HEK293T (cell line): ENCODE measurements at regions of chr15 and their contacts with region 1.

Region 1: DNA sequence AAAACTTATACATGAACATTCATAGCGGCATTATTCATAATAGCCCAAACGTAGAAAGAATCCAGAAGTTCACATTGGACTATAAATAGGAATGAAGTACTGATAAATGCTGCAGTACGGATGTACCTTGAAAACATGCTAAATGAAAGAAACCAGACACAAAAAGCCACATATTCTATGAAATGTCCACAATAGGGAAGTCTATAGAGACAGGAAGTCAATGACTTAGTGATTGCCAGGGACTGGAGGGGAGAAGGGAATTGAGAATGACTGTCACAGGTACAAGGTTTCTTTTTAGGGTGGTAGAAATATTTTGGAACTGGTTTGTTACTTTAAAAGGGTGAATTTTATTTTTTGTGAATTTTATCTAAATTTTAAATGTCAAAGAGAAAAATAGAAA is 71.4 kb upstream of the SKOR1 start:
- DNase-seq: no peak

Region 2: DNA sequence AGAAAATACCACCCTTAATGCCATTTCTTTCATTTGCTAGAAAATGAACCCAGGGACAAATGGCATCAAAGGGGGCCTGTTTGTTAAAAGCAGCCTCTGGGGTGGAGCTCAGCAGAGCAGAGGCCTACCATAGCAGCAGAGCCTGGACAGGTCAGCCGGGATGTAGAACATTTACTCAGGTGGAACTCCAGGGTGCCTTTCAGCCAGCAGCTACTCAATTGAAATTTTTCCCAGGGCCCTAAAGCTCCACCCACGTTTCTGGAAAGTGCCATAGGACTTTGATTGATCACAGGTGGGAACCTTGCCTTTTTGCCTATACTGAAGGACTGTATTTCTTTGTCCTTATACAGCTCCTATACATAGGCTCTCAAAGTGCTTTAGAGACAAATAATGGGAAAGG is 307.4 kb before region 1 on chr15:
- CTCF ChIA-PET with region 1: interaction called, 13 read pairs
- POLR2A ChIA-PET with region 1: no interaction called
- DNase-seq: no peak